ENCODE measurements at regions of chr1 and their contacts with region 1.

Region 1: DNA sequence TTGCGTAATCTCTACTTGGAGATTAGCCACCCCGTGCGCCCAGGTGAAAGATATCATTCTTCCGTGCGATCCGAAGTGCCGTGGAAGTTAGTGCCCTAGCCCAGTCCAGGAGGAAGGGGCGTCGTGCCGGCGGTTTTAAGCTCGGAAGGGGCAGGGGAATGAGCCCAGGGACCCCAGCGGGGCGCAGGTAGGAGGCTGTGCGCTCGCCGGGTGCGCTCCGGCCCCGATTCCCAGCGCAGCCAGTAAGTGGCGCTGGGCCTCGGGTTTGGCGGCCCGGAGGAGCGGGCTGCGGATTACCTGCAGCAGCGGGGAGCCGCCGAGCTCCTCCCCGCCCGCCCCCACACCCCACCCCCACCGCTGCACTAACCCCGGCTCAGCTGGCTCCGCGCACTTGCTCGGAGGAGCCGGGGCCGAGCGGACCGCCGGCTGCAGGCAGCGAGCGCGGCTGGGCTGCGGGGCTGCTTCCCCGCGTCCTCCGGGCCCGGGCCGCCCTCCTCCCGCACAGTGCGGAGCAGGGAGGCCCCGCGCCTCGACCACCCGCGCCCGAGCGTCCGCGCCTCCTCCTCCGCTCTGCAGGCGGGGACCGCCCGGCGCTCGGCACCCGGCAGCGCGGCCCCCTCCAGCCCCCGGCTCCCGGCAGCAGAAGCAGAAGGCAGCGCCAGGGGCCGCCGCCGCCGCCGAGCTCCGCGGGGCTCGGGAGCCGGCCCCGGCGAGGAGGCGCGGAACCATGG is at the start of gene RYR2:
- DNase-seq: no peak
- H3K4me3 Mint-ChIP-seq: peak within 1 kb of the TSS; percentile 62
- H3K27ac Mint-ChIP-seq: no peak within 1 kb of the TSS
- H3K4me1 Mint-ChIP-seq: peaks cover 12% of the 10 kb centered on the region
- H3K27me3 Mint-ChIP-seq: peaks cover 46% of the 10 kb centered on the region
- total RNA-seq, gene RYR2: 8.7 and 8.8 TPM in 2 replicates

Region 2: GRCh38 chr1:237303929-237304328 is 262.0 kb after region 1 on chr1:
- intact Hi-C with region 1: loop called (anchors 10 kb)
- DNase-seq: no peak
- H3K4me3 Mint-ChIP-seq: no peak overlapping the region
- H3K27ac Mint-ChIP-seq: peak overlapping the region; percentile 21
- H3K4me1 Mint-ChIP-seq: peaks cover 16% of the 10 kb centered on the region
- H3K27me3 Mint-ChIP-seq: no peaks in the 10 kb centered on the region

Region 3: DNA sequence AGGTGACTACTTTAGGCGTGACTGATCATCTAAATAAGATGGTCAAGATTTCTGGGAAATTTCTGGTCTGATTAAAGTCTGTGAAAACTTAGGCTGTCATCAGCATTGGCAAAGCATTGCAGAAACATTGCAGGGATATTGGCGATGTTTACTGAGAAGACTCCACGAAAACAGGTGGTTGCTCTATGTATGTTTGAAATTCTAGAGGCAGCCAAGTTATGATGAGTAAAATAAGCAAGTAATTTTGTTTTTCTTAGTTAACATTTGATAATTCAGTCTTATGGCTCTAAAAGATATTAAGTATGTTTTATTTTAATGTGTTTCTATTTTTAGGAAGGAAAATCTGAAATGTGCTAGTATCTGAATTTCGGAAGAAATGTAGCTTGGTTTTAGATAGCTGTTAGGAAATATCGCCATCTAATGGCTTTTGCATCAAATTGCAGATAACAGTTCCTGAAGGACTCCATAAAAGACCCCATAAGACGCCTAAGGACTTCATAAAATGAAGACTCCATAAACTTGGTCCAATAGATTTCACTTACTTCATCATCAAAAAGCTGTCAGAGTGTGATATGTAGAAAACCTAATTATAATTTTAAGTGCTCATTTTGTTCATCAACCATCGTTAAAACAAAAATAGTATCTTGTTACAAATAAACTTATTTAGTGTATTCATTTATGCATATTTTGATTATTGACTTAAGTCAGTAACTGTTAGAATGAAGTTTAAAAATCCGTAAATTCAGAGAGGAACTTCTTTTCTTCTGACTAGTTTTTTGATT is 344.6 kb after region 1 on chr1:
- intact Hi-C with region 1: loop called (anchors 10 kb)
- DNase-seq: no peak
- H3K4me3 Mint-ChIP-seq: no peak overlapping the region
- H3K27ac Mint-ChIP-seq: no peak overlapping the region
- H3K4me1 Mint-ChIP-seq: peaks cover 9% of the 10 kb centered on the region
- H3K27me3 Mint-ChIP-seq: no peaks in the 10 kb centered on the region

Region 4: DNA sequence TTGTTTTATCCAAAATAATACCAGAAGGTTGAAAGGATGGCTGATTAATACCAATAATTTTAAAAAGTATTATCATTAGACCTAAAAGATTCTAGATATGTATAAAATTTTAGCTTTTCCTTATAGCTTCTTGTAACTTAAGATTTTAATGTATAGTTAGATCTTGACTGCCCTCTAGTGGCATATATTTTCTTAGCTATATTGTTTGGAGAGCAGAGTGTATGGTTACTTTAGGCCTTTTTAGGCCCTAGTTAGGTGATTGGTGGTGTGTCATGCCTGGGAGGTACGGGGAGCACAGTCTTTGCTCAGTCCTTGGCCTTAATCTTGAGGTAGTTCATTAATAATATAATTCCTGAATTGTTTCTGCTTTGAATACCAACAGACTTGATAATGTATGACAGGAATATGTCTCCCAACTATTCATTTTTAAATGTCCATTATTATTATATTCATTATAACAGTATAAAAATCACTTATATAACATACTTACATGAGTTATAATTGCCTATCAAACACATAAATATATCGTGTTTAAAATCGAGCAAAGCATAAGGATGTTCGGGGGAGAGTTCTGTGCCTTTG is 520.4 kb after region 1 on chr1:
- intact Hi-C with region 1: loop called (anchors 10 kb)
- DNase-seq: no peak
- H3K4me3 Mint-ChIP-seq: no peak overlapping the region
- H3K27ac Mint-ChIP-seq: no peak overlapping the region
- H3K4me1 Mint-ChIP-seq: no peaks in the 10 kb centered on the region
- H3K27me3 Mint-ChIP-seq: peaks cover 1% of the 10 kb centered on the region

Measured in activated T-helper 2 cell treated with anti-CD3 and anti-CD28 coated beads, Interferon-gamma antibody, Interleukin-2, Interleukin-4, amounts not matched to agents 10 μg/mL and 5 μg/mL and 100 μg/mL, durations not matched to agents 14 hours and 24 hours and 36 hours (primary cell).